Heart left ventricle (tissue), 16 donors: ENCODE measurements at regions of chr5 and their contacts with region 1.

Region 1: DNA sequence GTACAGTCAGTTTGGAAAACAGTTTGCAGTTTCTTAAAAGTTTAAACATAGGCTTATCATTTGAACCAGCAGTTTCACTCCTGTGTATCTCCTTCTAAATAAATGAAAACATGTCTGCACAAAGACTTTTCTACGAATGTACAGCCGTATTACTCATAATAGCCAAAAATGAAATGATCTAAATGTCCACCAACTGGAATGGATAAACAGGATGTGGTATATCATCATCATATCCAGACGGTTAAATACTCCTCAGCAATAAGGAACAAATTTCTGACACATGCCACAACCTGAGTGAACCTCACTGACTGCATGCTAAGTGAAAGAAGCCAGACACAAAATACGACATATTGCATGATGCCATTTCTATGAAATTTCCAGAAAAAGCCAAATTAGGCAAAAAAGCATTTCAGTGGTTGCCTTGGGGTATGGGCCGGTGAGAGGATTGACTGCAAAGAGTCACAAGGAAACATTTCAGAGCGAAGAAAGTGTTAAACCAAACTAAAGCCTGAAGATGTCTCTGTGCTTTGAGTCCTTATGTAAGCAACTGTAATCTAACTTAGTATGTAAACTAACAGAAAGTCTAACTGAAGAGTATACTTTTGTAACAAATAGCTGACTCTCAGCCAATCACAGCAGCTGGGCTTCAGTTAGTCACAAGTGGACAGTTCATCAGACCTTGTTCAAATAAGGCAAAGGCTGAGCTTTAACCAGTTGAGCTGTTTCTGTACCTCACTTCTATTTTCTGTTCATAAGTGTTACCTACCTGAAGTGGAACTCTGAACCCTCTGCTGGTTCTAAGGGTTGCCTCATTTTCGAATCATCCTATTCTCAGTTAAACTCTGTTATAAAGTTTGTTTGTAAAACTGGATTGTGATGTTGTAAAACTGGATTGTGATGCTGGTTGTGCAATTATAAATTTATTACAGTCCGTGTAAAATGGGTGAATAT is 65.2 kb downstream of the TRIO start:
- DNase-seq: no peak
- ATAC-seq: peak in 2 of 4 donors; percentile 29 to 54
- H3K4me3 ChIP-seq: no peak overlapping the region
- H3K27ac ChIP-seq: peak overlapping the region in 2 of 12 donors; percentile 35 to 63
- H3K4me1 ChIP-seq: peaks cover 5 to 83% (median 44%) of the 10 kb centered on the region in 12 donors
- H3K27me3 ChIP-seq: no peaks in the 10 kb centered on the region
- CTCF ChIP-seq: no peak
- POLR2A ChIP-seq: no peak

Region 2: DNA sequence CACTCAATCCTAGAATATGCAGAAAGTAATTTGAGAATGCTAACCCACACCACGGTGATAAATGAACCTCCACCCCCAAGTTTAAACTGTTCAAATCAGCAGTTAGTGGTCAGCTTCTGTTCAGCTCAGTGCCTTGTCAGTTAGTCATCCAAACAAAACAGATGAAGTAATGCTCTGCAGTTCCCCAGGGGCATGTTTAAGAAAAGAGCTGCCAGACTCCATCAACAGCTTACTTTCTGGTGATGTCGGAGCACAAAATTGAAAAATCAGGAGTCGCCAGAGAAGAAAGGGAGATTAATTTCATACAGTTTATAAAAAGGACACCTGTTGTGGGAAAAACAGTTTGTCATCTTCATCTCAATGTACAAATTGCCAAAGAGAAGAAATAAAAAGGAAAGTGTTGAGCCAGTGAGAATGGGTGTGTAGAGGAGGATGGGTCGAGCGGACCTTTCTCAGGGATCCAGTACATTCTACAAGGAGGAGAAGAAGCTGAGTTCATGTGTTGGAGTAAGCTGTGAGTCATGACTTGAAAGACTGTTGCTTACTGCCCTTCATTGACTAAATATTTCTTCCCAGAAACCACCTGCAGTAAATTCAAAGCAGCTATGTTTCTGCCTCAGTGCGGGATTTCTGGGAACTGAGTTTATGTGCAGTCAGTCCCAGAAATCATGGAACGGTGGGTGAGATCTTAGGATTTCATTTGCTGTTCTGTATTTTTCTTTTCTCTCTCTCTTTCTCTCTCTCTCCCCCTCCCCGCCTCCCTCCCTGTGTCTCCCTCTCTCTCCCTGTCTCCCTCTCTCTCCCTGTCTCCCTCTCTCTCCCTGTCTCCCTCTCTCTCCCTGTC is 51.5 kb before region 1 on chr5:
- intact Hi-C with region 1: loop called in 1 of 10 experiments (anchors 10 kb)
- DNase-seq: peak in 2 of 5 donors; percentile 56 to 57
- ATAC-seq: peak; percentile 43 to 82 (median 74)
- H3K4me3 ChIP-seq: peak overlapping the region in 8 of 12 donors; percentile 18 to 45 (median 30)
- H3K27ac ChIP-seq: peak overlapping the region in 9 of 12 donors; percentile 17 to 87 (median 51)
- H3K4me1 ChIP-seq: peaks cover 25 to 76% (median 68%) of the 10 kb centered on the region in 12 donors
- H3K27me3 ChIP-seq: no peaks in the 10 kb centered on the region
- CTCF ChIP-seq: no peak
- POLR2A ChIP-seq: no peak

Region 3: DNA sequence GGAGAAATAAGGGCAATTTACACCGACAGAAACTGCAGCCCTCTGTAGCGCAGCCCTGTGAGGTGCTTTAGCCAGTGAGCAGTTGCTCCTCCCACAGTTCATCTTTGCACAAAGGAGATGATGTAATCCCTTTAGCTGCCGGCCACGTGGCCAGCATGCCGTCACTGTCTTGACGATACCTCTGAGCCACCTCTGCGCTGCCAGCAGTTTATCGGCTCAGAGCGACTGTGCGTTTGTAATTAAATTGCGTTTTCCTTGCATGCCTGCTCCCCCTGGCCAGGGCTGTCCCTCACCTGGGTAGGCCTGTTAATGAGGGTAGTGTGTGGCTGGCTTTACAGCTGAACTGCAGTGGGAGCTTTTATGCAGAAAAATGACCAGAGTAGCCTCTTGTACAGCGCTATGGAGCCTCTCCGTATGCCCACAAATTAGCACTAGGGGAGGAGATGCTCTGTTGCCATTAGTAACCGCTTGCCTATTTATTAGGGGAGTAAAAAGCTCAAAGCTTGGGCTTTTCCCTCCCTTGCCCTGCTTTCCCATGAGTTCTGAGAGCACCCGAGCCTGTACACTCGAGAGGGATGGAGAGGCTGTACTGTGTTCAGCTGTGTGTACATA is 41.8 kb after region 1 on chr5:
- intact Hi-C with region 1: loop called in 2 of 10 experiments (anchors 5 to 10 kb)
- DNase-seq: peak in 4 of 5 donors; percentile 66 to 77 (median 72)
- ATAC-seq: peak; percentile 83 to 91 (median 86)
- H3K4me3 ChIP-seq: peak overlapping the region in 7 of 12 donors; percentile 11 to 31 (median 25)
- H3K27ac ChIP-seq: peak overlapping the region; percentile 10 to 80 (median 70)
- H3K4me1 ChIP-seq: peaks cover 9 to 86% (median 57%) of the 10 kb centered on the region in 12 donors
- H3K27me3 ChIP-seq: no peaks in the 10 kb centered on the region
- CTCF ChIP-seq: no peak
- POLR2A ChIP-seq: no peak

Region 4: DNA sequence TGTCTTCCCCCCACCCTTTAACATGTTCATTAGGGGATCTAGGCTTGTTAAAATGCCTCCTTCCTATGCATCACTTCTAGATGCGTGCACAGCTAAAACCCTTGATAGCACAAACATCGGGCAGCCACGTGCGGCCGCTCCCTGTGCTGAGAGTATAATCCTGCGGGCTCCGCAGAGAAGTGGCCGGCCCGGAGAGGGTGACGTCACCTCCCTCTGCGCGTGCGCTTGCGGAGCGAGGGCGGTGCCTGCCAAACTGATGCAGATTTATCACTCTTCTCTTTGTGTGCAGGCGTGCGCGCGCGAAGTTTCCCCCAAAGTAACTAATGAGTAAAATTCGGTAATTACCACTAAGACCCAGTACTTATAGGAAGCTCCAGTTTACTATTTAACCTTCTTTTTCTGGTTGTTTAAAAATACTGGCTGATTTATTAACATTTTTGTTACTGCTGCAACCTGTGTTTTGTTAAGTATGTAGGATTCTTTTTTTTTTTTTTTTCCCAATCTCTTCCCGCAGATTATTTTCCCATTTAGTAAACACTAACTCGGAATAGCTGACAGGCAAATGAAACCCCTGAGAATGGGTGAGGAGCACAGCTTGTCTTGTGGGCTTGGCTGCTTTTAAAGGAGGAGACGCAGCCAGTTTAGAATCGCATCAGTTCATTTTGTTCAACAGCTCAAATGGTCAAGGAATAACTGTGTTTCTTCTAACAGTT is 56.4 kb after region 1 on chr5:
- intact Hi-C with region 1: loop called in 3 of 10 experiments (anchors 5 to 10 kb)
- DNase-seq: peak; percentile 89 to 95 (median 93)
- ATAC-seq: peak; percentile 89 to 95 (median 94)
- H3K4me3 ChIP-seq: peak overlapping the region in 9 of 12 donors; percentile 4 to 45 (median 27)
- H3K27ac ChIP-seq: peak overlapping the region in 6 of 12 donors; percentile 1 to 38 (median 10)
- H3K4me1 ChIP-seq: peaks cover 12 to 73% (median 49%) of the 10 kb centered on the region in 12 donors
- H3K27me3 ChIP-seq: no peaks in the 10 kb centered on the region
- CTCF ChIP-seq: no peak
- POLR2A ChIP-seq: peak in 1 of 2 donors; percentile 28

Region 5: GRCh38 chr5:14397717-14398116 is 189.4 kb after region 1 on chr5:
- intact Hi-C with region 1: no loop called
- DNase-seq: no peak
- ATAC-seq: peak in 1 of 4 donors; percentile 13
- H3K4me3 ChIP-seq: no peak overlapping the region
- H3K27ac ChIP-seq: peak overlapping the region in 2 of 12 donors; percentile 18 to 26
- H3K4me1 ChIP-seq: peaks cover 0 to 29% (median 8%) of the 10 kb centered on the region in 12 donors
- H3K27me3 ChIP-seq: no peaks in the 10 kb centered on the region
- CTCF ChIP-seq: no peak
- POLR2A ChIP-seq: no peak